Activated naive CD4-positive, alpha-beta T cell treated with anti-CD3 and anti-CD28 coated beads, Interleukin-2, amount 10 ng/mL, durations not matched to agents 7 days and 5 days (primary cell): ENCODE measurements at regions of chr3 and their contacts with region 1.

Region 1: DNA sequence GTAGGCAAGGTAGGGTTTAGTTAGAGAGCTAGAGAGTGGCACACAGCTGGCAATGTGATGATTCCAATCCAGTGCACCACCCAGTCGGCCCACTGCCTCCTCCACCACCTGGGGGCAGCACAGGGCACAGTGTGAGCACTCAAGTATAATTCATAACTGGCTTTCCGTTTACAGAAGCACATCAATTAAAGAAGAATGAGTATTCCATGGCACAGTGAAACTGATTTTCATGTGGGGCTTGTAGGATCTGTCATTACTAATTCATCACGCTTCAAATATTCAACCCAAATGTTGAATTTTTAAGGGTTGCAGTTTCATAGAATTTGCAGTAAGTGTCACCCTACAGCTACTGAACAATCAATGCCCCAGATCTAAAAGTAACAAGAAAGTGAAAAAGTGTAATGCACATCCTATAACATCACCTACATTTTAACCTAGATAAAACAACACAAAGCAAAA is 149.9 kb downstream of the IGSF11 start:
- DNase-seq: peak; percentile 85
- H3K4me3 Mint-ChIP-seq: no peak overlapping the region
- H3K27ac Mint-ChIP-seq: no peak overlapping the region
- H3K4me1 Mint-ChIP-seq: peaks cover 11% of the 10 kb centered on the region
- H3K27me3 Mint-ChIP-seq: peaks cover 23% of the 10 kb centered on the region

Region 2: GRCh38 chr3:118641608-118642007 is 243.2 kb before region 1 on chr3:
- CTCF ChIA-PET with region 1: no interaction called
- DNase-seq: peak; percentile 21
- H3K4me3 Mint-ChIP-seq: no peak overlapping the region
- H3K27ac Mint-ChIP-seq: no peak overlapping the region
- H3K4me1 Mint-ChIP-seq: no peaks in the 10 kb centered on the region
- H3K27me3 Mint-ChIP-seq: no peaks in the 10 kb centered on the region

Region 3: GRCh38 chr3:118912188-118912587 is 27.4 kb after region 1 on chr3:
- CTCF ChIA-PET with region 1: interaction called, 11 read pairs
- DNase-seq: no peak
- H3K4me3 Mint-ChIP-seq: no peak overlapping the region
- H3K27ac Mint-ChIP-seq: no peak overlapping the region
- H3K4me1 Mint-ChIP-seq: no peaks in the 10 kb centered on the region
- H3K27me3 Mint-ChIP-seq: peaks cover 4% of the 10 kb centered on the region

Region 4: DNA sequence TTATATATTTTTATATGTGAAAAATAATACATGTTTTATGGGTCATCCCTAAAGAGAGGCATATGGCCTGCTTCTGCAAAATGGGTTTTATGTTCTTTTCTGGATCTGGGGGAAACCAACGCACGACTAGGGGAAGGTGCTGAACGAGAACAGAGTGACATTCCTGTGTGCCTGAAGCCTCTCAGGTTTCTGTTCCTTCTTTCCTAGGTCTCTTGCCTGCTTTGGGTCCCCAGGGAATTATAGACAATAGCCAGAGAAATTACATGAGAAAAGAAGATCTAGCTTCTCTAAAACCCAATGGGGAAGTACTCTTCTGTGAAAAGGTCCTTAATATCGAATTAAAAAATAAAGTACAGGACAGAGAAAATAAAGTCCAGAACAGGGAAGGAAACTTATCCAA is 83.3 kb after region 1 on chr3:
- CTCF ChIA-PET with region 1: interaction called, 14 read pairs
- DNase-seq: no peak
- H3K4me3 Mint-ChIP-seq: no peak overlapping the region
- H3K27ac Mint-ChIP-seq: no peak overlapping the region
- H3K4me1 Mint-ChIP-seq: no peaks in the 10 kb centered on the region
- H3K27me3 Mint-ChIP-seq: peaks cover 4% of the 10 kb centered on the region

Region 5: GRCh38 chr3:119034256-119035013 is 149.7 kb after region 1 on chr3 and contains the start of gene IGSF11:
- CTCF ChIA-PET with region 1: interaction called, 348 read pairs
- DNase-seq: peak; percentile 77
- H3K4me3 Mint-ChIP-seq: peak within 1 kb of the TSS; percentile 82
- H3K27ac Mint-ChIP-seq: no peak within 1 kb of the TSS
- H3K4me1 Mint-ChIP-seq: peaks cover 11% of the 10 kb centered on the region
- H3K27me3 Mint-ChIP-seq: peaks cover 52% of the 10 kb centered on the region

Region 6: GRCh38 chr3:119240591-119241434 is 356.0 kb after region 1 on chr3 and contains the start of gene B4GALT4:
- CTCF ChIA-PET with region 1: interaction called, 56 read pairs
- DNase-seq: peak; percentile 83
- H3K4me3 Mint-ChIP-seq: peak within 1 kb of the TSS; percentile 78
- H3K27ac Mint-ChIP-seq: peak within 1 kb of the TSS; percentile 88
- H3K4me1 Mint-ChIP-seq: peaks cover 46% of the 10 kb centered on the region
- H3K27me3 Mint-ChIP-seq: no peaks in the 10 kb centered on the region

Region 7: DNA sequence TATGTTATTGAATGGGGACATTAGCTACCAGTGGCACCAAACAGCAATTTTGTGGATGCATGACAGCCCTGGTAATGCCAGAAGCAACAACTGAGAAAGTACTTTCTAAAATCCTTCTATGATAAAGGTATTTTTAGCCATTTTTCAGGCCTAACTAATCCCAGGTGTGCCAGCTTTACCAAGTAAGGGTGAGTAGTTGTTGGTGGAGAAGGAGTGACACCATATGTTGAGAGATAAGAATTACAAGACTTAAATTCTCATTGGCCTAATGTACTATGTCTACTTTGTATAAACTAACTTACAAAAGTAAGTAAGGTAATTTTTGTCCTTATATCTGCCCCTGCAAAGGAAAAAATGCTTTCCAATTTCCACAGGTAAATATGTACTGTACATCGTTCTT is 796.5 kb after region 1 on chr3:
- CTCF ChIA-PET with region 1: interaction called, 21 read pairs
- DNase-seq: no peak
- H3K4me3 Mint-ChIP-seq: no peak overlapping the region
- H3K27ac Mint-ChIP-seq: no peak overlapping the region
- H3K4me1 Mint-ChIP-seq: peaks cover 11% of the 10 kb centered on the region
- H3K27me3 Mint-ChIP-seq: no peaks in the 10 kb centered on the region